ENCODE measurements at regions of chr12 and their contacts with region 1.

Region 1: GRCh38 chr12:49342066-49342913 is 4.4 kb upstream of the DNAJC22 start:
- DNase-seq: peak; percentile 86
- H3K4me3 Mint-ChIP-seq: peak overlapping the region; percentile 31
- H3K27ac Mint-ChIP-seq: no peak overlapping the region
- H3K4me1 Mint-ChIP-seq: peaks cover 45% of the 10 kb centered on the region
- H3K27me3 Mint-ChIP-seq: peaks cover 100% of the 10 kb centered on the region

Region 2: GRCh38 chr12:49288412-49288853 is 53.9 kb before region 1 on chr12:
- CTCF ChIA-PET with region 1: interaction called, 103 read pairs
- DNase-seq: peak; percentile 84
- H3K4me3 Mint-ChIP-seq: no peak overlapping the region
- H3K27ac Mint-ChIP-seq: no peak overlapping the region
- H3K4me1 Mint-ChIP-seq: peaks cover 2% of the 10 kb centered on the region
- H3K27me3 Mint-ChIP-seq: peaks cover 81% of the 10 kb centered on the region

Region 3: DNA sequence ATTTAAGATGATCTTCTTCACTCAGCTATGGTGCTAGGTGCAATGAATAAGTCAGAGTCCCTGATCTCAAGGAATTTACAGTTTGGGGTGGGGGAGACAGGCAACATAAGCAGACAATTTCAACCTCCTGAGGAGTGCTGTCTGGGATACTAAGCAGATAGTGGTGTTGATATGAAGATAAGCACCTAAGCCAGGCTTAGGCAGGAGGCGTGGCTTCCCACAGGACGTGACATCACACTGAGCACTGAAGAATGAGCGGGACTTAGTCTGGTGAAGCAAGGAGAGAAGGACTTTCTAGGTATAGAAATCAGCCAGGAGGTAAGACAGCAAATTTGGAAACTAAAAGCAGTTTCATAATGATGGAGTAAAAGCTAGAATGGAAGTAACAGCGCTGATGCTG is 40.5 kb before region 1 on chr12:
- CTCF ChIA-PET with region 1: interaction called, 103 read pairs
- DNase-seq: peak; percentile 49
- H3K4me3 Mint-ChIP-seq: no peak overlapping the region
- H3K27ac Mint-ChIP-seq: no peak overlapping the region
- H3K4me1 Mint-ChIP-seq: peaks cover 24% of the 10 kb centered on the region
- H3K27me3 Mint-ChIP-seq: peaks cover 83% of the 10 kb centered on the region

Measured in activated naive CD4-positive, alpha-beta T cell treated with anti-CD3 and anti-CD28 coated beads, Interleukin-2, amount 10 ng/mL, durations not matched to agents 7 days and 5 days (primary cell).